ENCODE measurements at regions of chr15 and their contacts with region 1.

Region 1: DNA sequence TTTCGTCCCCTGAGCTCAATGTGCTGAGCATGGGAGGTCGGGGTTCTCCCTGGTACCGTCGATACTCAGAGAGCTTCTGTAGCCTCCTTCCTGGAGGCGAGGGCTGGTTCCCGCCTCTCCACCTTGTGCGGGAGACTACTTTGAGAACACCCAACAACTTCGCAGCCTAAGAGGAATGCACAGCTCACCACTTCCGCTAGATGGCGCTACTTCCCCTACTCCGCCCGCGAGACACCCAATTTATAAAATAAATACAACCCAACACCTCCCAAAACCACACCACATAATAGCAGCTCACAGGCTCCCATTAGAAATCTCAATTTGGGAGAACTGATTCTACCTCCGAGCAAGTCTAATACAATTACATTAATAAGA is 1.2 kb downstream of the RGMA start:
- DNase-seq: peak; percentile 66
- H3K4me3 ChIP-seq: peak overlapping the region; percentile 34 to 60 (median 52)
- H3K27ac ChIP-seq: peak overlapping the region; percentile 67 to 88 (median 84)
- H3K4me1 ChIP-seq: peaks cover 4 to 35% (median 10%) of the 10 kb centered on the region in 4 donors
- H3K27me3 ChIP-seq: peaks cover 89% of the 10 kb centered on the region
- CTCF ChIP-seq: peak; percentile 77 to 93 (median 88)
- EP300 ChIP-seq: no peak
- POLR2A ChIP-seq: no peak

Region 2: DNA sequence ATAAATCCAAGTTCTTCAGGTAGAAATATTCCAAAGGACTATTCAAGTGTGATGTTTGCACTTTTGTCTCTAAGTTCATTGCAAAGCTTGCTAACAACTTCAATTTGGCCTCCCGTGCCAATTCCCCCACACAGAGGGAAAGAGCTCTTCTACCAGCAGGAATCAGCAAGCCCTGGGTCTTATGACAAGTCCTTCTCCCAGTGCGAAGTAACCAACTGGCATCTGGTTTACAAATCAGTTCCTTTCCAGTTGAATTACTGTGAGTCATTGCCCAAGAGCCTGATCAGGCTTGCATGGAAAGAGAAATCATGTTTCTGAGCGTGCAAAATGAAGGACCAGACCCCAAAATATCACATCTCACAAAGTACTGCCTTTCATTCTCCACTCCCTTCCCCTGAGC is 1297.0 kb before region 1 on chr15:
- in situ Hi-C with region 1: no loop called
- intact Hi-C with region 1: no loop called
- DNase-seq: no peak
- H3K4me3 ChIP-seq: no peak overlapping the region
- H3K27ac ChIP-seq: no peak overlapping the region
- H3K4me1 ChIP-seq: no peaks in the 10 kb centered on the region
- H3K27me3 ChIP-seq: no peaks in the 10 kb centered on the region
- CTCF ChIP-seq: no peak
- EP300 ChIP-seq: no peak
- POLR2A ChIP-seq: no peak

Region 3: GRCh38 chr15:93417631-93418030 is 329.8 kb after region 1 on chr15:
- in situ Hi-C with region 1: loop called in 1 of 4 experiments (anchors 10 kb)
- intact Hi-C with region 1: no loop called
- DNase-seq: no peak
- H3K4me3 ChIP-seq: no peak overlapping the region
- H3K27ac ChIP-seq: no peak overlapping the region
- H3K4me1 ChIP-seq: no peaks in the 10 kb centered on the region
- H3K27me3 ChIP-seq: no peaks in the 10 kb centered on the region
- CTCF ChIP-seq: no peak
- EP300 ChIP-seq: no peak
- POLR2A ChIP-seq: no peak

Region 4: GRCh38 chr15:93495799-93496637 is 408.2 kb after region 1 on chr15:
- in situ Hi-C with region 1: no loop called
- intact Hi-C with region 1: no loop called
- DNase-seq: no peak
- H3K4me3 ChIP-seq: no peak overlapping the region
- H3K27ac ChIP-seq: no peak overlapping the region
- H3K4me1 ChIP-seq: no peaks in the 10 kb centered on the region
- H3K27me3 ChIP-seq: no peaks in the 10 kb centered on the region
- CTCF ChIP-seq: no peak
- EP300 ChIP-seq: no peak
- POLR2A ChIP-seq: no peak

Region 5: GRCh38 chr15:93974804-93975481 is 887.1 kb after region 1 on chr15:
- in situ Hi-C with region 1: loop called in 3 of 4 experiments (anchors 25 kb)
- intact Hi-C with region 1: loop called (anchors 5 kb)
- DNase-seq: no peak
- H3K4me3 ChIP-seq: no peak overlapping the region
- H3K27ac ChIP-seq: no peak overlapping the region
- H3K4me1 ChIP-seq: peaks cover 0 to 2% (median 0%) of the 10 kb centered on the region in 4 donors
- H3K27me3 ChIP-seq: no peaks in the 10 kb centered on the region
- CTCF ChIP-seq: peak in 4 of 5 experiments; percentile 20 to 41 (median 34)
- EP300 ChIP-seq: no peak
- POLR2A ChIP-seq: no peak

Region 6: DNA sequence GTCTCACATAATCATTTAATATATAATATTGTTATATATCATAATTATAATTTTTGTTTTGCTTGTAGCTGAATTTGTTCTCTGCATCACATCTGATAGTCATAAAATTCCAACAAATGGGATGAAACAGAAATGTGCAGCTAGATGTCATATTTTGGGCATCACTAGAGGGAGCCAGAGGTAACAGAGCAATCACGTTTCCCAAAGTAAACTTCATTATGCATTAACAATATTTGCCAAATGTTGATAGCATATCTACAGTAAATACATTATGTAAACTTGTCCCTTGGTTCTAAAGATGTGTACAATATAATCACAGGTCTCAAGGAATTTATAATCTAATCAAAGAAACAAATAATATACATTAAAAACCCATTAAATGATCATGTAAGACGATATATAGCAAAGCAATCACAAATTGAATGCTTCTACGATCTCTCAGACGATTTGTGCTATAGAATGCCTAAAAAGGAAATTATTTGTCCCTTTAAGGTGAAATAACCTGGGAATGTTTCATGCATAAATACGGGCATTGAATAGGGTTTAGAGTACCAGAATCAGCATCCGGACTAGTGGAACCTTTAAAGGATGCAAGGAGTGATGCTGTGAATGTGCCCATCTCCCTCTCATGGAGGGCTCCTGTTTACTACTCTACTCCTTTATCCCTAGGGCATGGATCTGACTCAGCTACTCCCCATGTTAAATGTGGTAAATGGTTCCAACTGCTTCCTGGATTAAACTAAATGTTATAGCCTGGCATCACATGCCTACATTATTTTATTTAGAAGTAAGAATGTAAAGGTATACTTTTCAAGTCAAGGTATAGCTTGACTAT is 909.5 kb after region 1 on chr15:
- in situ Hi-C with region 1: loop called in 3 of 4 experiments (anchors 25 kb)
- intact Hi-C with region 1: no loop called
- DNase-seq: no peak
- H3K4me3 ChIP-seq: no peak overlapping the region
- H3K27ac ChIP-seq: no peak overlapping the region
- H3K4me1 ChIP-seq: no peaks in the 10 kb centered on the region
- H3K27me3 ChIP-seq: no peaks in the 10 kb centered on the region
- CTCF ChIP-seq: peak; percentile 51 to 73 (median 62)
- EP300 ChIP-seq: no peak
- POLR2A ChIP-seq: no peak

Region 7: GRCh38 chr15:94119923-94120775 is 1032.3 kb after region 1 on chr15:
- in situ Hi-C with region 1: no loop called
- intact Hi-C with region 1: loop called (anchors 2 kb)
- DNase-seq: peak; percentile 56
- H3K4me3 ChIP-seq: no peak overlapping the region
- H3K27ac ChIP-seq: peak overlapping the region; percentile 51 to 81 (median 61)
- H3K4me1 ChIP-seq: peaks cover 0 to 16% (median 3%) of the 10 kb centered on the region in 4 donors
- H3K27me3 ChIP-seq: no peaks in the 10 kb centered on the region
- CTCF ChIP-seq: peak; percentile 83 to 97 (median 90)
- EP300 ChIP-seq: no peak
- POLR2A ChIP-seq: no peak